MCF 10A (cell line): ENCODE measurements at regions of chr2 and their contacts with region 1.

Region 1: GRCh38 chr2:154375579-154375931 is 322.9 kb upstream of the KCNJ3 start:
- DNase-seq: peak; percentile 60
- H3K4me3 Mint-ChIP-seq: peak overlapping the region; percentile 52
- H3K27ac Mint-ChIP-seq: no peak overlapping the region
- H3K4me1 Mint-ChIP-seq: peaks cover 8% of the 10 kb centered on the region
- H3K27me3 Mint-ChIP-seq: peaks cover 63% of the 10 kb centered on the region
- CTCF ChIP-seq: peak; percentile 65

Region 2: GRCh38 chr2:152740743-152741328 is 1634.7 kb before region 1 on chr2:
- CTCF ChIA-PET with region 1: no interaction called
- POLR2A ChIA-PET with region 1: no interaction called
- intact Hi-C with region 1: loop called (anchors 10 kb)
- DNase-seq: peak; percentile 63
- H3K4me3 Mint-ChIP-seq: no peak overlapping the region
- H3K27ac Mint-ChIP-seq: no peak overlapping the region
- H3K4me1 Mint-ChIP-seq: no peaks in the 10 kb centered on the region
- H3K27me3 Mint-ChIP-seq: no peaks in the 10 kb centered on the region
- CTCF ChIP-seq: peak; percentile 81

Region 3: DNA sequence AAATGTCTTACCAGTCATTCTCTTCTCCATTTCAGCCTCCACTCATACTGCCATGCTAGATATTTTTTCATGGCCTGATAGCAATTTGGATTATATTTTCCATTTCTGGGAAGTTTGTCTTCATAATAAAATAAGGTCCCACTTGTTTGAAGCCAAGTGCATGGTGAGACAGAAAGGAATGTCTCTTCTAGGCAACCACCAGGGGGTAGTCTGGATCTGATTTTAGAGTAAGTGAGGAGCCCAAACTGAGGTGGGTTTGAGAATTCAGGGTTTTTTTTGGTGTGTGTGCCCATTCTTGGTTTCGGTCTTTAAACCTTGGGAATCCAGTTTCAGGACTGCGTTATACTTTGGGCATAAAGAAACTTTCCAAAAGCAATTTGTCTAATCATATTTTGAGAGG is 1212.5 kb before region 1 on chr2:
- CTCF ChIA-PET with region 1: no interaction called
- POLR2A ChIA-PET with region 1: no interaction called
- intact Hi-C with region 1: loop called (anchors 1 kb)
- DNase-seq: peak; percentile 67
- H3K4me3 Mint-ChIP-seq: no peak overlapping the region
- H3K27ac Mint-ChIP-seq: no peak overlapping the region
- H3K4me1 Mint-ChIP-seq: peaks cover 10% of the 10 kb centered on the region
- H3K27me3 Mint-ChIP-seq: peaks cover 35% of the 10 kb centered on the region
- CTCF ChIP-seq: peak; percentile 61

Region 4: GRCh38 chr2:153487448-153487847 is 888.1 kb before region 1 on chr2:
- CTCF ChIA-PET with region 1: no interaction called
- POLR2A ChIA-PET with region 1: no interaction called
- intact Hi-C with region 1: loop called (anchors 10 kb)
- DNase-seq: peak; percentile 28
- H3K4me3 Mint-ChIP-seq: no peak overlapping the region
- H3K27ac Mint-ChIP-seq: no peak overlapping the region
- H3K4me1 Mint-ChIP-seq: peaks cover 6% of the 10 kb centered on the region
- H3K27me3 Mint-ChIP-seq: peaks cover 30% of the 10 kb centered on the region
- CTCF ChIP-seq: no peak

Region 5: GRCh38 chr2:153770359-153770991 is 605.1 kb before region 1 on chr2:
- CTCF ChIA-PET with region 1: interaction called, 3 read pairs
- POLR2A ChIA-PET with region 1: no interaction called
- intact Hi-C with region 1: loop called (anchors 5 kb)
- DNase-seq: peak; percentile 17
- H3K4me3 Mint-ChIP-seq: no peak overlapping the region
- H3K27ac Mint-ChIP-seq: no peak overlapping the region
- H3K4me1 Mint-ChIP-seq: no peaks in the 10 kb centered on the region
- H3K27me3 Mint-ChIP-seq: no peaks in the 10 kb centered on the region
- CTCF ChIP-seq: peak; percentile 9

Region 6: GRCh38 chr2:153787612-153788011 is 587.9 kb before region 1 on chr2:
- CTCF ChIA-PET with region 1: interaction called, 5 read pairs
- POLR2A ChIA-PET with region 1: no interaction called
- intact Hi-C with region 1: loop called (anchors 5 kb)
- DNase-seq: no peak
- H3K4me3 Mint-ChIP-seq: no peak overlapping the region
- H3K27ac Mint-ChIP-seq: no peak overlapping the region
- H3K4me1 Mint-ChIP-seq: no peaks in the 10 kb centered on the region
- H3K27me3 Mint-ChIP-seq: peaks cover 9% of the 10 kb centered on the region
- CTCF ChIP-seq: peak; percentile 15

Region 7: GRCh38 chr2:153871231-153872221 is 504.0 kb before region 1 on chr2 and contains the start of gene GALNT13:
- CTCF ChIA-PET with region 1: interaction called, 5 read pairs
- POLR2A ChIA-PET with region 1: no interaction called
- intact Hi-C with region 1: loop called (anchors 5 kb)
- DNase-seq: no peak
- H3K4me3 Mint-ChIP-seq: peak within 1 kb of the TSS; percentile 6
- H3K27ac Mint-ChIP-seq: no peak within 1 kb of the TSS
- H3K4me1 Mint-ChIP-seq: peaks cover 13% of the 10 kb centered on the region
- H3K27me3 Mint-ChIP-seq: peaks cover 30% of the 10 kb centered on the region
- CTCF ChIP-seq: no peak
- total RNA-seq, gene GALNT13: 0.44 and 0.54 TPM in 2 replicates

Region 8: DNA sequence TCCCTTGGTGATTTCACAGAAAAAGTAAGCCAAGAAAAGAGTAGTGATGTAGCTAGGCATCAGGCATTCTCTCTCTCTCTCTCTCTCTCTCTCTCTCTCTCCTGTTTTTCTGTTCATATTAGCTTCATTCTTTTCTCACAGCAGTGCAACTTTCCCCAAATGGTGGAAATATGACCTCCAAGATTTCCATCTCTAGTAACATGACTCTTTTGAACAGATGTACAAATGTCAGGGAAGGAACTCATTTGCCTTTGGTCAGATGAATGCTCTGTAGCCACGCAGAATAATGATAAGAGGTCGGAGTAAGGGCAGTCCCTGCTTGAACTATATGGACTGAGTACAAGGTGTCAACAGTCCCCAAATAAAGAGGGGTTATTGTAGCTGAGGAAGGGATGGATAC is 187.6 kb before region 1 on chr2:
- CTCF ChIA-PET with region 1: no interaction called
- POLR2A ChIA-PET with region 1: no interaction called
- intact Hi-C with region 1: no loop called
- DNase-seq: no peak
- H3K4me3 Mint-ChIP-seq: no peak overlapping the region
- H3K27ac Mint-ChIP-seq: no peak overlapping the region
- H3K4me1 Mint-ChIP-seq: no peaks in the 10 kb centered on the region
- H3K27me3 Mint-ChIP-seq: peaks cover 14% of the 10 kb centered on the region
- CTCF ChIP-seq: no peak

Region 9: GRCh38 chr2:154466226-154466625 is 90.7 kb after region 1 on chr2:
- CTCF ChIA-PET with region 1: no interaction called
- POLR2A ChIA-PET with region 1: no interaction called
- intact Hi-C with region 1: no loop called
- DNase-seq: no peak
- H3K4me3 Mint-ChIP-seq: no peak overlapping the region
- H3K27ac Mint-ChIP-seq: no peak overlapping the region
- H3K4me1 Mint-ChIP-seq: no peaks in the 10 kb centered on the region
- H3K27me3 Mint-ChIP-seq: peaks cover 69% of the 10 kb centered on the region
- CTCF ChIP-seq: no peak

Region 10: GRCh38 chr2:154658854-154659253 is 283.3 kb after region 1 on chr2:
- CTCF ChIA-PET with region 1: no interaction called
- POLR2A ChIA-PET with region 1: no interaction called
- intact Hi-C with region 1: no loop called
- DNase-seq: no peak
- H3K4me3 Mint-ChIP-seq: no peak overlapping the region
- H3K27ac Mint-ChIP-seq: no peak overlapping the region
- H3K4me1 Mint-ChIP-seq: no peaks in the 10 kb centered on the region
- H3K27me3 Mint-ChIP-seq: peaks cover 70% of the 10 kb centered on the region
- CTCF ChIP-seq: no peak